H1 (cell line): ENCODE measurements at regions of chr11 and their contacts with region 1.

Region 1: DNA sequence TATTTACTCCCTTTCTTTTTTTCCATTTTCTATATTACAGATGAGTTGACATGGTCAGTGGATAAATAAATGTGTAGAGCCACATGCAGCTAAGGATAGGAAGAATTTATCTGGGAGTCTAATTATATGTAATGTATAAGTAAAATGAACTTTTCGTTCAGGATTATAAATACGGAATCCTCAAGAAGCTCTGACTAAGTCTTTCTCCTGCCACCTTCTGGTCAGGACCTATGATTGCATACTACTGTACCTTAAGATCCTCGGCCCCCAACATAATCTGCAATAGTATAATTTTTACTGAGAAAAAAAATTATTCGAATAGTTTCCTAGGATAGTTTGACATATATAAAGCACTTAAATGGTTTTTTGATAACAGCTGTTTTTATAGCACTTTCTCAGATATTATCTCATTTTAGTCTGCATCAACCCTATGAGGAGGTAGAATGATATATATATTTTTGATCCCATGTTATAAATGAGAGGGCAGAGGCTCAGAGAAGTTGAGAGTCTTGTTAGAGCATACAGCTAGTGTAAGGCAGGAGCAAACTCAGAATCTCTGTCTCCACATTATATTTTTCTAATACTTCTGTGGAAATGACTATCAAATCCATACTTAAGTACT is 36.1 kb downstream of the CCDC90B start:
- DNase-seq: no peak
- H3K4me3 ChIP-seq: no peak overlapping the region
- H3K27ac ChIP-seq: no peak overlapping the region
- H3K4me1 ChIP-seq: no peaks in the 10 kb centered on the region
- H3K27me3 ChIP-seq: no peaks in the 10 kb centered on the region
- CTCF ChIP-seq: peak in 2 of 3 experiments; percentile 41 to 45; a peak in 2 of 4 replicates
- EP300 ChIP-seq: no peak
- POLR2A ChIP-seq: no peak
- RAD21 ChIP-seq: peak; percentile 49 to 61

Region 2: GRCh38 chr11:83219095-83219494 is 31.0 kb before region 1 on chr11:
- CTCF ChIA-PET with region 1: interaction called, 32 read pairs
- POLR2A ChIA-PET with region 1: no interaction called
- DNase-seq: peak in 1 of 2 experiments; percentile 55
- H3K4me3 ChIP-seq: no peak overlapping the region
- H3K27ac ChIP-seq: no peak overlapping the region
- H3K4me1 ChIP-seq: no peaks in the 10 kb centered on the region
- H3K27me3 ChIP-seq: no peaks in the 10 kb centered on the region
- CTCF ChIP-seq: peak; percentile 60 to 76 (median 65)
- EP300 ChIP-seq: no peak
- POLR2A ChIP-seq: no peak
- RAD21 ChIP-seq: peak; percentile 79 to 80

Region 3: GRCh38 chr11:83235825-83236224 is 14.3 kb before region 1 on chr11:
- CTCF ChIA-PET with region 1: interaction called, 69 read pairs
- POLR2A ChIA-PET with region 1: no interaction called
- DNase-seq: no peak
- H3K4me3 ChIP-seq: no peak overlapping the region
- H3K27ac ChIP-seq: no peak overlapping the region
- H3K4me1 ChIP-seq: no peaks in the 10 kb centered on the region
- H3K27me3 ChIP-seq: no peaks in the 10 kb centered on the region
- CTCF ChIP-seq: no peak
- EP300 ChIP-seq: no peak
- POLR2A ChIP-seq: no peak
- RAD21 ChIP-seq: no peak

Region 4: GRCh38 chr11:83282084-83282716 is 32.1 kb after region 1 on chr11:
- CTCF ChIA-PET with region 1: interaction called, 11 read pairs
- POLR2A ChIA-PET with region 1: interaction called, 3 read pairs
- DNase-seq: no peak
- H3K4me3 ChIP-seq: no peak overlapping the region
- H3K27ac ChIP-seq: no peak overlapping the region; the same call in 1 of the 2 replicates
- H3K4me1 ChIP-seq: 0 out of 7 replicates have a peak, but pooled peaks cover 0 to 1% (median 0%) of the 10 kb centered on the region in 4 experiments
- H3K27me3 ChIP-seq: no peaks in the 10 kb centered on the region
- CTCF ChIP-seq: no peak
- EP300 ChIP-seq: no peak
- POLR2A ChIP-seq: no peak
- RAD21 ChIP-seq: no peak